ENCODE measurements at regions of chr10 and their contacts with region 1.

Region 1: DNA sequence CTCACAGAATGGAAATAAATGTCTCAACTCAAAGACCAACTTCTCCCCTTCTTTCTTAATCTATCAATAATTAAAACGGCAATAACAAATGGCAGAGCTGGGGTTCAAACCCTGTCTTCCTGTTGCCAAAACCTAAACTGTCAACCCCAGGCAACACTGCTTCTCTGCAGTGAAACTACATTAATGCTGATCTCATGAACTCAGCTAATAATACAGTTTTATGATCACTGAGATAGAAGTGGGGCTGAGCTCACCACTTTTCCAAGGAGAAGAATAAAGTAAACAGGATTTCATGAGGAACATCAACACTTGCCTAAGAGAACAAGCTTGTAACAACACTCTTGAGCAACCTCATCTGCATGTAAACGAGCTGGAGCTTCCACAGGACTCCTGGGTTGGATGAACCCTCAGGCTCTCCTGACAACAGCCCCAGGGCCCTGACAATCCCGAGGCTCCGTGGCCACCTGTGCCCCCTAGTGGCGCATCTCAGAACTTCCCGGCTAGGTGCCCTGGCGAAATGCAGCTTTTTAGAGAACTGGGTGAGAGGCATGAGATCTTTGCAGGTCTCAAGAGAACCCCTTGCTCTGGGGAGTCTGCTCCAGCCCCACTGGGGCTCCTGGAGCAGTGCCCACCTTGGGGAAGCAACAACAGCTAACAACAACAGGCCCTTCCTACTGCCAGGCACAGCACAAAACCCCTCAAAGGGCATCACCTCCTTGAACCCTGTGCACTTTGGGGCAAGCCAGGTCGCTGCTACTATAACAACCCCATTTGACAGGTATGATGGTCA is 169.3 kb downstream of the SH3PXD2A start:
- DNase-seq: peak; percentile 51 to 78 (median 61)
- H3K4me3 ChIP-seq: no peak overlapping the region
- H3K4me3 Mint-ChIP-seq: no peak overlapping the region
- H3K27ac ChIP-seq: no peak overlapping the region
- H3K27ac Mint-ChIP-seq: peak overlapping the region in 4 of 8 donors; percentile 29 to 87 (median 54)
- H3K4me1 ChIP-seq: no peaks in the 10 kb centered on the region
- H3K4me1 Mint-ChIP-seq: peaks cover 0 to 6% (median 0%) of the 10 kb centered on the region in 3 donors
- H3K27me3 ChIP-seq: no peaks in the 10 kb centered on the region
- H3K27me3 Mint-ChIP-seq: no peaks in the 10 kb centered on the region

Region 2: GRCh38 chr10:103504181-103504783 is 181.8 kb before region 1 on chr10:
- CTCF ChIA-PET with region 1: no interaction called
- POLR2A ChIA-PET with region 1: no interaction called
- DNase-seq: peak in 2 of 5 donors; percentile 45 to 55
- H3K4me3 ChIP-seq: no peak overlapping the region
- H3K4me3 Mint-ChIP-seq: peak overlapping the region in 4 of 7 donors; percentile 0 to 6 (median 4)
- H3K27ac ChIP-seq: no peak overlapping the region
- H3K27ac Mint-ChIP-seq: peak overlapping the region in 5 of 8 donors; percentile 2 to 62 (median 4)
- H3K4me1 ChIP-seq: peaks cover 15% of the 10 kb centered on the region
- H3K4me1 Mint-ChIP-seq: peaks cover 9 to 14% (median 12%) of the 10 kb centered on the region in 3 donors
- H3K27me3 ChIP-seq: no peaks in the 10 kb centered on the region
- H3K27me3 Mint-ChIP-seq: peaks cover 17% of the 10 kb centered on the region in 2 donors

Region 3: GRCh38 chr10:103592186-103593021 is 93.7 kb before region 1 on chr10:
- CTCF ChIA-PET with region 1: interaction called, 14 read pairs
- POLR2A ChIA-PET with region 1: no interaction called
- DNase-seq: peak in 1 of 5 donors; percentile 25
- H3K4me3 ChIP-seq: no peak overlapping the region
- H3K4me3 Mint-ChIP-seq: no peak overlapping the region
- H3K27ac ChIP-seq: no peak overlapping the region
- H3K27ac Mint-ChIP-seq: no peak overlapping the region
- H3K4me1 ChIP-seq: no peaks in the 10 kb centered on the region
- H3K4me1 Mint-ChIP-seq: no peaks in the 10 kb centered on the region
- H3K27me3 ChIP-seq: no peaks in the 10 kb centered on the region
- H3K27me3 Mint-ChIP-seq: no peaks in the 10 kb centered on the region

Region 4: GRCh38 chr10:103605359-103606095 is 80.5 kb before region 1 on chr10:
- CTCF ChIA-PET with region 1: interaction called, 55 read pairs
- POLR2A ChIA-PET with region 1: no interaction called
- DNase-seq: peak; percentile 10 to 61 (median 24)
- H3K4me3 ChIP-seq: no peak overlapping the region
- H3K4me3 Mint-ChIP-seq: no peak overlapping the region
- H3K27ac ChIP-seq: no peak overlapping the region
- H3K27ac Mint-ChIP-seq: peak overlapping the region in 2 of 8 donors; percentile 42 to 61
- H3K4me1 ChIP-seq: no peaks in the 10 kb centered on the region
- H3K4me1 Mint-ChIP-seq: no peaks in the 10 kb centered on the region
- H3K27me3 ChIP-seq: no peaks in the 10 kb centered on the region
- H3K27me3 Mint-ChIP-seq: peaks cover 0 to 3% of the 10 kb centered on the region in 2 donors

Region 5: DNA sequence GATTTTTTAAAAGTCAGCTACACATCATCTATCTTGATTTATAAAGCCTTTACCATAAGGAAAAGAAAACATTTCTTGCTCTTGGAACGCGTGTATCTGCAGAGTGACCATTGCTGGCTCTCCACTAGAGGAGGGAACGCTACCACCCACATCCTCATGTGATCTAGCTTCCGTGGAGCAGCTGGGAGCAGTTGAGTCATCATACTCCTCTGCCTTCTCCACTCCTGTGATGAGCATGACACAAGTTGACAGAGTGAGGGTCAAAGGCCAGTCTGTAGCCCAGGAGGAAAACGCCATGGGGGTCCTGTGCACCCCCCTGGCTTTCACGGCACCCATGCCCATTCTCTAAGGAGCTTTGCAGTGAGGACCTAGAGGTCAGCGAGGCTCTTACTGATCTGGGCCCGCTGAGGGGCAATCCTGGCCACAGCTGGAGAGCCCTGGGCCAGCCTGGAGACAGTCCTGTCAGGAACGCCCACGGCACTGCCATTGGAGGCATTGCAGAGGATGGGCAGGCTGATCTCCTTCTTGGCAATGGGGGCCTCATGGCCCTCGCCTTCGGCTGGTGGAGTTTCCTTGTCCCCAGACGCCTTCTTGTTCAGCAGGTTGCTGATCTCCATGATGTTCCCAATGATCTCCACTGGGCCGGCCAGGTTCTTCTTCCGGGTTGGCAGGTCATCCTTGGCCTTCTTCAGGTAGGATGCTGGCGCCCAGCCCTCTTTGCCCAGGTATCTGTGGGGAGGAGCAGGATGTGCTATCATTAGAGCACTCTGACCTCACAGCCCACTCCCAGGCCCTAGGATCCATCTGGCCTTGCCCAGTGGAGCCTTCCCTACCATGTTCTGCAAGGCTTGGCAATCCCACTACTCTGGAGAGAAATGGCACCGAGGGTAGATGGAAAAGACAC is 73.4 kb before region 1 on chr10:
- CTCF ChIA-PET with region 1: interaction called, 31 read pairs
- POLR2A ChIA-PET with region 1: no interaction called
- DNase-seq: no peak
- H3K4me3 ChIP-seq: no peak overlapping the region
- H3K4me3 Mint-ChIP-seq: no peak overlapping the region
- H3K27ac ChIP-seq: no peak overlapping the region
- H3K27ac Mint-ChIP-seq: peak overlapping the region in 1 of 8 donors; percentile 31
- H3K4me1 ChIP-seq: no peaks in the 10 kb centered on the region
- H3K4me1 Mint-ChIP-seq: no peaks in the 10 kb centered on the region
- H3K27me3 ChIP-seq: no peaks in the 10 kb centered on the region
- H3K27me3 Mint-ChIP-seq: no peaks in the 10 kb centered on the region

Region 6: DNA sequence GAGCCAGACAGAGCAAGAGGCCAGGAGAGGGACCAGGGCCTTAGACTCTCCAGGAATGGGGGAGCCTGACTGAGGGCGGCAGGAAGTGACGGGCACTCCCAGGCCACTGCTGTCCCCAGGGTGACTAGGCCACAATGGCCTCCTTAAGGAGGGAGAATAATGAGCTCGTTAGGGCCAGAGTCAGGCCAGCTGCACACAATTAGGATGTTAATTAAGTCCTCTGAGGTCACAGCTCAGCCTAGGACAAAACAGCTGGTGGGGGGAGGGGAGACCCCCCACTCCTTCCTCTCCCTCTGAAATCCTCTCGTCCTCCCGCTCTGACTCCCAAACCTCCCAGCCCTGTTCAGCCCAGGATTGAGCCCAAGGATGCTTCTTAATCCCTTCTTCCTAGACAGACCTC is 49.6 kb before region 1 on chr10:
- CTCF ChIA-PET with region 1: no interaction called
- POLR2A ChIA-PET with region 1: no interaction called
- DNase-seq: no peak
- H3K4me3 ChIP-seq: no peak overlapping the region
- H3K4me3 Mint-ChIP-seq: no peak overlapping the region
- H3K27ac ChIP-seq: no peak overlapping the region
- H3K27ac Mint-ChIP-seq: peak overlapping the region in 2 of 8 donors; percentile 21 to 61
- H3K4me1 ChIP-seq: no peaks in the 10 kb centered on the region
- H3K4me1 Mint-ChIP-seq: peaks cover 0 to 13% (median 2%) of the 10 kb centered on the region in 3 donors
- H3K27me3 ChIP-seq: no peaks in the 10 kb centered on the region
- H3K27me3 Mint-ChIP-seq: peaks cover 0 to 6% of the 10 kb centered on the region in 2 donors

Region 7: GRCh38 chr10:103659674-103660363 is 26.3 kb before region 1 on chr10:
- CTCF ChIA-PET with region 1: interaction called, 37 read pairs
- POLR2A ChIA-PET with region 1: interaction called, 4 read pairs
- DNase-seq: peak; percentile 29 to 69 (median 54)
- H3K4me3 ChIP-seq: peak overlapping the region; percentile 91
- H3K4me3 Mint-ChIP-seq: peak overlapping the region; percentile 85 to 94 (median 88)
- H3K27ac ChIP-seq: peak overlapping the region; percentile 60
- H3K27ac Mint-ChIP-seq: peak overlapping the region; percentile 76 to 98 (median 92)
- H3K4me1 ChIP-seq: peaks cover 6% of the 10 kb centered on the region
- H3K4me1 Mint-ChIP-seq: peaks cover 8 to 34% (median 15%) of the 10 kb centered on the region in 3 donors
- H3K27me3 ChIP-seq: no peaks in the 10 kb centered on the region
- H3K27me3 Mint-ChIP-seq: no peaks in the 10 kb centered on the region

Region 8: GRCh38 chr10:103666087-103666761 is 19.9 kb before region 1 on chr10:
- CTCF ChIA-PET with region 1: interaction called, 37 read pairs
- POLR2A ChIA-PET with region 1: interaction called, 4 read pairs
- DNase-seq: no peak
- H3K4me3 ChIP-seq: no peak overlapping the region
- H3K4me3 Mint-ChIP-seq: peak overlapping the region in 2 of 7 donors; percentile 4 to 77
- H3K27ac ChIP-seq: no peak overlapping the region
- H3K27ac Mint-ChIP-seq: peak overlapping the region in 5 of 8 donors; percentile 3 to 56 (median 20)
- H3K4me1 ChIP-seq: peaks cover 11% of the 10 kb centered on the region
- H3K4me1 Mint-ChIP-seq: peaks cover 16 to 34% (median 18%) of the 10 kb centered on the region in 3 donors
- H3K27me3 ChIP-seq: no peaks in the 10 kb centered on the region
- H3K27me3 Mint-ChIP-seq: peaks cover 0 to 2% of the 10 kb centered on the region in 2 donors

Region 9: GRCh38 chr10:103696411-103697145 is 10.5 kb after region 1 on chr10:
- CTCF ChIA-PET with region 1: interaction called, 16 read pairs
- POLR2A ChIA-PET with region 1: no interaction called
- DNase-seq: peak; percentile 12 to 74 (median 45)
- H3K4me3 ChIP-seq: peak overlapping the region; percentile 23
- H3K4me3 Mint-ChIP-seq: peak overlapping the region; percentile 17 to 77 (median 53)
- H3K27ac ChIP-seq: no peak overlapping the region
- H3K27ac Mint-ChIP-seq: peak overlapping the region in 7 of 8 donors; percentile 13 to 96 (median 82)
- H3K4me1 ChIP-seq: peaks cover 37% of the 10 kb centered on the region
- H3K4me1 Mint-ChIP-seq: peaks cover 21 to 37% (median 24%) of the 10 kb centered on the region in 3 donors
- H3K27me3 ChIP-seq: no peaks in the 10 kb centered on the region
- H3K27me3 Mint-ChIP-seq: peaks cover 0 to 2% of the 10 kb centered on the region in 2 donors

Region 10: DNA sequence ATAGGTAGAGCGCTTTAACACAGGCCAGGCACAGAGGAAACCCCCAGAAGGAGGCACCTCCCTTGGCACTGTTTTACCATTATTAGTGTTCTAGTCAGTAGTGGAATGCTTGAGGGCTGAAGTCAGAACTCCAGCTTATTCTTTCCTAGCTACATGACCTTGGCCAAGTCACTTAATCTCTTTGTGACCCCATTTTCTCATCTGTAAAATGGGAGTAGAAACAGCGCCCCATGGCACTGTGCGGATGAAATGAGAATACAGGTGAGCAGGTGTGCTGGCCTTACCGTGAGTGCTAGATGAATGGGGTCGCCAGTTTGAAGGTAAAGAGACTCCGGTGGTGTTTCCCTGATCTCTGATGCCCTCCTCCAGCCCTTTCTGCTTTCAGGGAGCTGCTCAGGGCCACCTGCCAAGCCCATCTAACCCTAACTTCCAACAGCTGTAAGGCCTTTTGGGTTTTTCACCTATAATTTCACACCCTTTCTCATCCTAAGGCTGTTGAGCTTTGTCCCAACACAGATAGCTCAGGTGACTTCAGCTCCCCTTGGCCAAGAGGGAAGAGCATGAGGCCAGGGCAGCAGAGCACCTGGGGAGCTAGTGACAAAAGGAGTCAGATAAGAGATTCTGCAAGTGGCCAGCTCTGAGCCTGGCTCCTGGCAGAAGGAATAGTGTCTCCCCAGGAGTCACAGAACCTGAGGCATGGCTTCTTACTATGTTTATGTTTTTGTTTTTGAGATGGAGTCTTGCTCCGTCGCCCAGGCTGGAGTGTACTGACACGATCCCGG is 92.5 kb after region 1 on chr10:
- CTCF ChIA-PET with region 1: no interaction called
- POLR2A ChIA-PET with region 1: no interaction called
- DNase-seq: no peak
- H3K4me3 ChIP-seq: no peak overlapping the region
- H3K4me3 Mint-ChIP-seq: no peak overlapping the region
- H3K27ac ChIP-seq: no peak overlapping the region
- H3K27ac Mint-ChIP-seq: no peak overlapping the region
- H3K4me1 ChIP-seq: no peaks in the 10 kb centered on the region
- H3K4me1 Mint-ChIP-seq: peaks cover 0 to 1% (median 0%) of the 10 kb centered on the region in 3 donors
- H3K27me3 ChIP-seq: no peaks in the 10 kb centered on the region
- H3K27me3 Mint-ChIP-seq: peaks cover 7 to 27% of the 10 kb centered on the region in 2 donors